Activated CD4-positive, alpha-beta T cell treated with anti-CD3 and anti-CD28 coated beads for 36 hours (primary cell): ENCODE measurements at regions of chr10 and their contacts with region 1.

Region 1: GRCh38 chr10:114486938-114487814 is 82.9 kb upstream of the AFAP1L2 start:
- DNase-seq: peak; percentile 43
- ATAC-seq: peak; percentile 78
- H3K4me3 Mint-ChIP-seq: no peak overlapping the region
- H3K27ac Mint-ChIP-seq: peak overlapping the region; percentile 88
- H3K4me1 Mint-ChIP-seq: peaks cover 64% of the 10 kb centered on the region
- H3K27me3 Mint-ChIP-seq: no peaks in the 10 kb centered on the region

Region 2: DNA sequence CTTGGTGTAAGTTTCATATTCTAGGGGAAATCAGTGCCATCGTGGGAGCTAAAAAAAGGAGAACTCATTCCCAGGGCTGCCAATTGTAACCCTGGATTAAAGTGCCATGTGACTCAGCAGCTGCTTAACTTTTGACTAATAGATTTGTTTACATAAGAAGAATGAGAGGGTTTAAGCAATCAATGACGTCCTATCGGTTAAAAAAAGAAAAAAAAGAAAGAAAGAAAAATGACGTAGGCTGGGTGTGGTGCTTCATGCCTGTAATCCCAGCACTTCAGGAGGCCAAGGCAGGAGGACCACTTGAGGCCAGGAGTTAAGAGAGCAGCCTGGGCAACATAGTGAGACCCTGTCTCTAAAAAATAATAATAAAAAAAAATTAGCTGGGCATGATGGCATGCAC is 33.3 kb after region 1 on chr10:
- CTCF ChIA-PET with region 1: interaction called, 12 read pairs
- POLR2A ChIA-PET with region 1: interaction called, 3 read pairs
- intact Hi-C with region 1: no loop called
- DNase-seq: no peak
- ATAC-seq: peak; percentile 17
- H3K4me3 Mint-ChIP-seq: peak overlapping the region; percentile 54
- H3K27ac Mint-ChIP-seq: peak overlapping the region; percentile 92
- H3K4me1 Mint-ChIP-seq: peaks cover 95% of the 10 kb centered on the region
- H3K27me3 Mint-ChIP-seq: no peaks in the 10 kb centered on the region

Region 3: DNA sequence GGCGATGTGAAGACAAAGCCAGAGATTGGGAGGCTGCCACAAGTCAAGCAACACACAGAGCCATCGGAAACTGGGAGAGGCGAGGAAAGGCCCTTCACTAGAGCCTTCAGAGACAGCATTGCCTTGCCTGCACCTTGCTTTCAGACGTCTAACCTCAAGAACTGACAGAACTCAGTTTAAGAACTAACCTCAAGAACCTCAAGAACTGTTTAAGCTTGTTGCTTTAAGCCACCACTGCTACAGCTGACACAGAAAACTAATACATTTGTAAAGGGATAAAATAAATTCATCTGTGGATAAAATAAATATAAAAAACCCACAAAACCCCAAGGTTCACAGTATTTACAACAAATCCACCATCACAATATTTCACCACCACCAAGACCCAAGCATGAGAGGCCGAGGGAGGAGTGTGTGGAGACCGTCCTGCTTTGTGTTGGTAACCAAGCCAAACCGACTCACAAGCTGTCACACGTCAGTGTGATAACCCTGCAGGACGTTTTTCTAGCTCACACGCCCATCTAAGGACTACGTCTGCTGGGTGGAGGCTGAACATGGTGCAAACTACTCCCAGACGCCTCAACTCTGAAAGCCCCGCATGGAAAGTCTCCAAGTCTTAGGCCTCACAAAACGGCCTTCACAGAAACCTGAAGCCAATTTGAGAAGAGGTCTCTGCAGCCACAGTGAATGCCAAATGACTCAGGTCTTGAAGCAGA is 54.1 kb after region 1 on chr10:
- CTCF ChIA-PET with region 1: interaction called, 14 read pairs
- POLR2A ChIA-PET with region 1: interaction called, 3 read pairs
- intact Hi-C with region 1: loop called in 1 of 2 experiments (anchors 1 kb)
- DNase-seq: peak; percentile 85
- ATAC-seq: peak; percentile 84
- H3K4me3 Mint-ChIP-seq: peak overlapping the region; percentile 55
- H3K27ac Mint-ChIP-seq: peak overlapping the region; percentile 99
- H3K4me1 Mint-ChIP-seq: peaks cover 90% of the 10 kb centered on the region
- H3K27me3 Mint-ChIP-seq: no peaks in the 10 kb centered on the region